Naive thymus-derived CD8-positive, alpha-beta T cell (primary cell): ENCODE measurements at regions of chr16 and their contacts with region 1.

Region 1: GRCh38 chr16:84593825-84594724 is 23.8 kb downstream of the COTL1 start:
- DNase-seq: peak; percentile 51 to 89 (median 76)
- ATAC-seq: peak; percentile 84 to 90
- H3K4me3 Mint-ChIP-seq: peak overlapping the region; percentile 78 to 91 (median 83)
- H3K27ac Mint-ChIP-seq: peak overlapping the region; percentile 93 to 99 (median 97)
- H3K4me1 Mint-ChIP-seq: peaks cover 41 to 77% (median 67%) of the 10 kb centered on the region in 4 donors
- H3K27me3 Mint-ChIP-seq: no peaks in the 10 kb centered on the region

Region 2: GRCh38 chr16:84459941-84460405 is 134.1 kb before region 1 on chr16:
- POLR2A ChIA-PET with region 1: no interaction called
- DNase-seq: peak in 1 of 10 donors; percentile 34
- ATAC-seq: no peak
- H3K4me3 Mint-ChIP-seq: no peak overlapping the region
- H3K27ac Mint-ChIP-seq: no peak overlapping the region
- H3K4me1 Mint-ChIP-seq: peaks cover 0 to 7% (median 3%) of the 10 kb centered on the region in 4 donors
- H3K27me3 Mint-ChIP-seq: no peaks in the 10 kb centered on the region

Region 3: GRCh38 chr16:84511180-84511824 is 82.8 kb before region 1 on chr16:
- POLR2A ChIA-PET with region 1: interaction called, 107 read pairs
- DNase-seq: peak; percentile 63 to 91 (median 86)
- ATAC-seq: peak; percentile 20 to 21
- H3K4me3 Mint-ChIP-seq: peak overlapping the region in 8 of 10 donors; percentile 3 to 64 (median 52)
- H3K27ac Mint-ChIP-seq: peak overlapping the region in 9 of 10 donors; percentile 80 to 92 (median 86)
- H3K4me1 Mint-ChIP-seq: peaks cover 33 to 87% (median 71%) of the 10 kb centered on the region in 4 donors
- H3K27me3 Mint-ChIP-seq: no peaks in the 10 kb centered on the region

Region 4: DNA sequence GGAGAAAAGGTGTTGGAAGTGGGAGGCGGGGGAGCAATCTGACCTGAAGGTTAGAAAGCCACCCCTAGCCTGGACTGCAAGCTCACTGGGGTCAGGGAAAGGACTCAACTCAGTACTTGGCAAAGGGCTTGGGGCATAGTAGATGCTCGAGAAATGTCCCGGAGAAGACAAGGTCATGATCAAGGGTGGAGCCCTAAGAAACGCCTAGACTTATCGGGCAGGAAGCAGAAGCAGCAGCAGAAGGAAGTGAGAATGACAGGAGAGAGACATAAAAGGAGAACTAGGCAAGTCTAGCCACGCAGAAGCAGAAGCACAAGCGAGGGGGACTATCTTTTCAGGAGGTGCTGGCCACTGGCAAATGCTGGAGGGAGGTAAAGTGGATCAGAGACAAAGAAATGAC is 13.6 kb after region 1 on chr16:
- POLR2A ChIA-PET with region 1: interaction called, 141 read pairs
- DNase-seq: peak in 3 of 10 donors; percentile 27 to 37 (median 33)
- ATAC-seq: peak; percentile 59 to 71
- H3K4me3 Mint-ChIP-seq: peak overlapping the region; percentile 60 to 88 (median 68)
- H3K27ac Mint-ChIP-seq: peak overlapping the region; percentile 51 to 99 (median 92)
- H3K4me1 Mint-ChIP-seq: peaks cover 51 to 96% (median 94%) of the 10 kb centered on the region in 4 donors
- H3K27me3 Mint-ChIP-seq: no peaks in the 10 kb centered on the region